ENCODE measurements at regions of chr19 and their contacts with region 1.

Region 1: GRCh38 chr19:2083174-2083854 is 12.8 kb downstream of the MOB3A start:
- H3K4me3 Mint-ChIP-seq: peak overlapping the region; percentile 68
- H3K27ac Mint-ChIP-seq: peak overlapping the region; percentile 100
- H3K4me1 Mint-ChIP-seq: peaks cover 85% of the 10 kb centered on the region
- H3K27me3 Mint-ChIP-seq: no peaks in the 10 kb centered on the region

Region 2: DNA sequence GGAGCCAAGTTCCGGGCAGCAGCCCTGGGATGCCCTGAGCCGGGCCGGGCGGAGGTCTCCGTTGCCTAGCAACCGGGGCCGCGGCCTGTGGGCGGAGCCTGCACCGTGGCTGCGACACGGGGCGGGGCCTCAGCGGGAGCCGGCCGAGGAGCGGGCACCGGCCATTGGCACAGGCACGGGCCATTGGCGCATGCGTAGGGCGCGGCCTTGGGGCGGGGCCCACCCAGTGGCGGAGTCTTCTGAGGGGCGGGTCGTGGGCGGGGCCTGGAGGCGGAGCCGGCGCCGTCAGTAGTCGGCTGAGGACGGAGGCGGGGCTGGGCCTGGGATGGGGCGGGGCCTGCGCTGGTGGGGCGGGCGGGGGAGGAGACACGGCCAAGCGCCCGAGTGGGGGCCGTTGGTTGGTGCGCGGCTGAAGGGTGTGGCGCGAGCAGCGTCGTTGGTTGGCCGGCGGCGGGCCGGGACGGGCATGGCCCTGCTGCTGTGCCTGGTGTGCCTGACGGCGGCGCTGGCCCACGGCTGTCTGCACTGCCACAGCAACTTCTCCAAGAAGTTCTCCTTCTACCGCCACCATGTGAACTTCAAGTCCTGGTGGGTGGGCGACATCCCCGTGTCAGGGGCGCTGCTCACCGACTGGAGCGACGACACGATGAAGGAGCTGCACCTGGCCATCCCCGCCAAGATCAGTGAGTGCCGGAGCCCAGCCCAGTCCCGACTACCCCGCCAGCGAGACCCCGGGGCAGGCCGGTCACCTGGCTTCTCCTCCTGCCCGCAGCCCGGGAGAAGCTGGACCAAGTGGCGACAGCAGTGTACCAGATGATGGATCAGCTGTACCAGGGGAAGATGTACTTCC is 13.4 kb after region 1 on chr19 and contains the start of gene IZUMO4:
- intact Hi-C with region 1: loop called (anchors 2 kb)
- H3K4me3 Mint-ChIP-seq: peak within 1 kb of the TSS; percentile 99
- H3K27ac Mint-ChIP-seq: peak within 1 kb of the TSS; percentile 100
- H3K4me1 Mint-ChIP-seq: peaks cover 55% of the 10 kb centered on the region
- H3K27me3 Mint-ChIP-seq: no peaks in the 10 kb centered on the region

Measured in dendritic cell treated with granulocyte-macrophage colony-stimulating factor and Interleukin-4, amounts not matched to agents 40 ng/mL and 50 ng/mL, for 4 days (primary cell).